Activated CD4-positive, alpha-beta T cell treated with anti-CD3 and anti-CD28 coated beads for 36 hours (primary cell): ENCODE measurements at regions of chr6 and their contacts with region 1.

Region 1: DNA sequence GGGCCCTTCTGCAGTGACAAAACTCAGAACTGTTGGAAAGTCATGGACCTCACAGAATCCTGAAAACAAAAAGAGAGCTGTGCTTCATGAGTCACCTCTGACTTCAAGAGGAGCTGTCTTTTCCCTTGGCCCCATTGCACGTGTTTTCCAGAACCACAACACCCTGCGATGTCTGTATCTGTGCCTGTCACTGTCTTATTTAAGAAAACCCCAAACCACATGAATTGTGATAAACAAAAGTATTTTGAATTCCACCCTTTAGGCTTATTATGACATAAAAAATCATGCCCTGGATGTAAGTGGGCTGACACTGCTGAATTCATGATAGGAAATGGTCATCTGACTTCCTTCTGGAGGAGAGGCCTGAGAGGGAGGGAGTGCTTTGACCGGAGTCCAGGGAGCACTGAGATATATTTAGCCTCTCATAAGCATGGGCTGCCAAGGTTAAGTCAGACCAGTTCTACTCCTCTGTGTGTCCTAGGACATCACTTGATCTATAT is 96.4 kb upstream of the DUSP22 start:
- DNase-seq: peak; percentile 84
- ATAC-seq: peak; percentile 45
- H3K4me3 Mint-ChIP-seq: no peak overlapping the region
- H3K27ac Mint-ChIP-seq: no peak overlapping the region
- H3K4me1 Mint-ChIP-seq: peaks cover 54% of the 10 kb centered on the region
- H3K27me3 Mint-ChIP-seq: no peaks in the 10 kb centered on the region

Region 2: GRCh38 chr6:176766-177165 is 19.1 kb before region 1 on chr6:
- CTCF ChIA-PET with region 1: no interaction called
- POLR2A ChIA-PET with region 1: no interaction called
- intact Hi-C with region 1: no loop called
- DNase-seq: no peak
- ATAC-seq: no peak
- H3K4me3 Mint-ChIP-seq: no peak overlapping the region
- H3K27ac Mint-ChIP-seq: no peak overlapping the region
- H3K4me1 Mint-ChIP-seq: peaks cover 22% of the 10 kb centered on the region
- H3K27me3 Mint-ChIP-seq: peaks cover 11% of the 10 kb centered on the region

Region 3: GRCh38 chr6:209432-210103 is 13.7 kb after region 1 on chr6:
- CTCF ChIA-PET with region 1: interaction called, 10 read pairs
- POLR2A ChIA-PET with region 1: interaction called, 5 read pairs
- intact Hi-C with region 1: loop called in 1 of 2 experiments (anchors 2 kb)
- DNase-seq: peak; percentile 88
- ATAC-seq: peak; percentile 95
- H3K4me3 Mint-ChIP-seq: peak overlapping the region; percentile 64
- H3K27ac Mint-ChIP-seq: peak overlapping the region; percentile 78
- H3K4me1 Mint-ChIP-seq: peaks cover 33% of the 10 kb centered on the region
- H3K27me3 Mint-ChIP-seq: peaks cover 30% of the 10 kb centered on the region

Region 4: DNA sequence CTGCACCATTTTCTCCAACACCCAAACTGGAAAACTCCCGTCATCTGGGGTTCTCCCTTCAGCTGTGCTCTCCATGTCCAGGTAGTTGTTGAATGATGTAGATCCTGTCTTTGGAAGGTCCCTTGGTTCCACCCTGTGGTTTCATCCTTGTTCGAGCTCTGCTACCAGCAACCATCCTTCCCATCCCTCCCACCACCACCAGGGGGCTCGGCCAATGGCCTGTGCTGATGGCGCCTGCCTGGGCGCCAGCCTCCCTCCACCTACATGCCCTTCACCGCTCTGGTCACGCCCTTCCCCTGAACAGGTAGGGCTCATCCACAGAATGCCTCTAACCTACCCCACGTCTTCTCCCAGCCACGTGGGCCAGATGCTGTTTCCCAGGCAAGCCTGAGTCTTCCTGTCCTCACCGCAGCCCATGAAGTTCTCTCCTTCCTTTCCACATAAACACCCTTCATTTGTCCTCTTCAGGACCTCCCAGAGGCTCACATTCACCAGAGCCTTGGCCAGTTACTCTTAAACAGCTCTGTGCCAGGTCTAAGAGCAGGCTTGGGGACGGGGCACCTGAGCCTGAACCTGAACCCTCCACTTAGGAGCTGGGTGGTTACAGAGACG is 21.2 kb after region 1 on chr6:
- CTCF ChIA-PET with region 1: interaction called, 11 read pairs
- POLR2A ChIA-PET with region 1: interaction called, 7 read pairs
- intact Hi-C with region 1: loop called in 1 of 2 experiments (anchors 1 kb)
- DNase-seq: peak; percentile 68
- ATAC-seq: no peak
- H3K4me3 Mint-ChIP-seq: no peak overlapping the region
- H3K27ac Mint-ChIP-seq: peak overlapping the region; percentile 41
- H3K4me1 Mint-ChIP-seq: peaks cover 59% of the 10 kb centered on the region
- H3K27me3 Mint-ChIP-seq: peaks cover 11% of the 10 kb centered on the region

Region 5: GRCh38 chr6:235763-236360 is 40.0 kb after region 1 on chr6:
- CTCF ChIA-PET with region 1: interaction called, 5 read pairs
- POLR2A ChIA-PET with region 1: no interaction called
- intact Hi-C with region 1: loop called (anchors 1 kb)
- DNase-seq: peak; percentile 87
- ATAC-seq: peak; percentile 90
- H3K4me3 Mint-ChIP-seq: peak overlapping the region; percentile 44
- H3K27ac Mint-ChIP-seq: peak overlapping the region; percentile 80
- H3K4me1 Mint-ChIP-seq: peaks cover 51% of the 10 kb centered on the region
- H3K27me3 Mint-ChIP-seq: no peaks in the 10 kb centered on the region

Region 6: DNA sequence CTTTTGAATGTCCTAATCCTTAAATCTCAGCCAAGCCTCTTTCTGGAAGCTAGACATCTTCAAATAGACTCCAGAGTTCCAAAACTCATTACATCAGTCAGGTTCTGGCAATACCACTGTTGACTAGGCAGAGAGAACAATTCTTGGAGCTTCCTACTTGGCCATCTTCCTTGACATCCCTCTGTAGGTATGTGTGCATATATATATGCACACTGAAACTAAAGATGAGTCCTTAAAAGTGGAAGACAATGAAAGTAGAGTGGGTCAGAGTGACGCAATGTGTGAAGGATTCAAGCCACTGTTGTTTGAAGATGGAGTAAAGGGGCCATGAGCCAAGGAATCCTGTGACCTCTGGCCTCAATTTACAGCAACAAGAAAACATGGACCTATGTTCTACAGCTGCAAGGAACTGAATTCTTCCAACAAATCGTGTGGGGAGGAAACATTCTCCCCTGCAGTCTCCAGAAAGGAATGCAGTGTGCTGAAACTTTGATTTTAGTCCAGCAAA is 77.7 kb after region 1 on chr6:
- CTCF ChIA-PET with region 1: no interaction called
- POLR2A ChIA-PET with region 1: no interaction called
- intact Hi-C with region 1: loop called in 1 of 2 experiments (anchors 2 kb)
- DNase-seq: no peak
- ATAC-seq: no peak
- H3K4me3 Mint-ChIP-seq: no peak overlapping the region
- H3K27ac Mint-ChIP-seq: no peak overlapping the region
- H3K4me1 Mint-ChIP-seq: peaks cover 24% of the 10 kb centered on the region
- H3K27me3 Mint-ChIP-seq: no peaks in the 10 kb centered on the region